AG04449 (cell line): ENCODE measurements at regions of chr10 and their contacts with region 1.

Region 1: DNA sequence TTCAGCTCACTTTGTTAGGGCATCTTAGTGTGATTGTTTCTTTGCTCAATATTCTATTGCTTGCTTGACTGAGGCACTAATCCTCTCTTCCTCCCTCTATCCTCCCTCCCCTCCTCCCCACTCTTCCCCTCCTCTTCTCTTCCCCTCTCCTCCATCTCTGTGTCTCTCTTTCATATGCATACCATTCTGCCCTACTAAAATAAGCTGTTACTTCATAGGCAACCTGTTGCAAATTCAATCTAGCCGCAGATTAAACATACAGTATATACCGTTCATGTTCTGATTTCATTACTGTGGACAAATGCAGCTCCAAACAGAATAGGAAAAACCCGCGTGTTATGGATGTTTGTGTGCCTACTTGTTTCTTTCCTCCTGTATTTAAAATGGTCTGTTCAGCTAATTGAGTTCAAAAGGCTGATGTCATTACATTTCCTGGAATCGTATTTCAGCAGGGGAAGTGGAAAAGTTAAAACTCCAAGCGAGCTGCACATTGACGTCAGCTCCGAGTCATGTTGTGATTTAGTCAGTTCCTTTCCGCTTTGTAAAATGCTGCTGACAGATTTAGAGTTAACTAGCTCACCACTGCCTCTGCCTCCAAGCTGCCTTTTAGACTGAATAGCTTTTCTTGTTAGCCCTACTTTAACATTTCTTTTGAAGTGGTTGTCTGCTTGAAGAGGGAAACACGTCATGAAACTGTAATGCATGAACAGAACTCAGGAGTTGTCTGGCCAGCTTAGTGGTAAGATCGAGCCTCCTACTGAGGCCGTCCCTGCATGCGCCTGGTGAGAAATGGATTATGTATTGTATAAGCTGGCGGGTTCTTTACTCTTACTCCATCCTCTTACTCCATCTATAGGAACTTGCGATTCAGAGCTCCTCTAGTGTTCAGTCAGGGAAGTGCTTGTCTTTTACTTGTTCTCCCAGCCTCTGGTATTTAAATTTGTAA is 69.0 kb downstream of the CREM start:
- DNase-seq: peak; percentile 82
- H3K4me3 ChIP-seq: peak overlapping the region; percentile 50
- CTCF ChIP-seq: peak; percentile 52

Region 2: GRCh38 chr10:35126530-35127296 is 68.9 kb before region 1 on chr10 and contains the start of gene CREM:
- CTCF ChIA-PET with region 1: interaction called, 34 read pairs
- POLR2A ChIA-PET with region 1: interaction called, 17 read pairs
- DNase-seq: peak; percentile 61
- H3K4me3 ChIP-seq: peak within 1 kb of the TSS; percentile 74
- CTCF ChIP-seq: peak; percentile 75

Region 3: DNA sequence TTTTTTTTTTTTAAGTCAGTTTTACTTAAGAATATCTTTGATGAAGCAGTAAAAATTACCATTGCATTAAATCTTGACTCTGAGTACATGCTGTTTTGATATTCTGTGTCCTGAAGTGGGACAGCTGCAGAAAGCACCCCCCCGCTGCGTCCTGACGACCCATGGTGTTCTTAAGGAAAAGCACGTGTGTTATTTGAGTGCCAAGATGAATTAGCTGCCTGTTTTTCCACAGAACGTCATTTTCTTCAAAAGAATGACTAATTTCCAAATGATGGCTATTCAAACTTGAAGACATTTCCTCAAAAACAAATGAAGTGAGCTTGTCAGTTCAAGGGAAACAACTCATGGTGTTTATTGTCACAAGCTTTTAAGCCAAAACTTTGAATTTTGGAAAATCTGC is 23.1 kb before region 1 on chr10:
- CTCF ChIA-PET with region 1: interaction called, 18 read pairs
- POLR2A ChIA-PET with region 1: no interaction called
- DNase-seq: no peak
- H3K4me3 ChIP-seq: no peak overlapping the region
- CTCF ChIP-seq: no peak

Region 4: GRCh38 chr10:35184527-35185171 is 11.0 kb before region 1 on chr10:
- CTCF ChIA-PET with region 1: interaction called, 27 read pairs
- POLR2A ChIA-PET with region 1: no interaction called
- DNase-seq: no peak
- H3K4me3 ChIP-seq: no peak overlapping the region
- CTCF ChIP-seq: no peak

Region 5: DNA sequence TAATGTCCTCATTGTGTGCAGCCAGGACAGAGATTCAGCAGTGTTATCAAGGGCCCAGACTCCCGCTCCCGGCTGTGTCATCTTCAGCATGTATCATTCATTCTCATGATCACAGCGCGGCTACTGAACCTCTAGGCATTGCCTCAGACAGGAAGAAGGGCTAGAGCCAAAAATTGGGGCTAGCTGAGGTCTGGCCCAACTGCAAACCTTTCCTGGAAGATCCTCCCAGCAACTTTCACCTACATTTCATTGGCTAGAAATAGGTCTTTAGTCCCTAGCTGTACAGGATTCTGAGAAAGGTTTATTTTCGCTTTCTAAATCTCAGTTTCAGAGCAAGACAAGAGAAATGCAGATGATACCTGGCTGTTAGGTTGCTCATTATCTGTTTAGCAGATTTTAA is 12.9 kb after region 1 on chr10:
- CTCF ChIA-PET with region 1: interaction called, 53 read pairs
- POLR2A ChIA-PET with region 1: no interaction called
- DNase-seq: no peak
- H3K4me3 ChIP-seq: no peak overlapping the region
- CTCF ChIP-seq: no peak

Region 6: DNA sequence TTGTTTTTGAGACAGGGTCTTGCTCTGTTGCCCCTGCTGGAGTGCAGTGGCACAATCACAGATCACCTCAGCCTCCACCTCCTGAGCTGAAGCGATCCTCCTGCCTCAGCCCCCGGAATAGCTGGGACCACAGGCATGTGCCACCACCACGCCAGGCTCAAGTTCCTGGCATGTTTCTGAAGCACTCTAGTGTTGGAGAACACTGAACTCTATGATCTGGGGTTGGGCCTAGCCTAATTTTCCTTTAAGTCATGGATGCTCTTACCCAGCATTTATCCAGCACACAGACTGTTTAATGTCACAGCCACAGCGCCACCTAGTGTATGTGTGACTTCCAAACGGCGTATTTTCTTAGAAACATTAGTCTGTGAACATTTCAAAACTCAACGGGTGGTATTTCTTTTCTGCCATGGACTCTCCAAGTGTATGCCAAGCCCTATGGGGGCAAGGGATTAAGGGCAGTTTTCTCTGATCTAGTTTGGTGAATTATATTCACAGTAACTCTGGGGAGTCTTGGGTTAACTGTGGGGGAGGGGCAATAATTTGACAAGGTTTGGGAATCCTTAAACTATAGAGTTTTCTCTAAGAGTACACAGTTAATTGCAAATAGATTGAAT is 22.8 kb after region 1 on chr10:
- CTCF ChIA-PET with region 1: interaction called, 39 read pairs
- POLR2A ChIA-PET with region 1: no interaction called
- DNase-seq: no peak
- H3K4me3 ChIP-seq: no peak overlapping the region
- CTCF ChIP-seq: peak; percentile 71

Region 7: DNA sequence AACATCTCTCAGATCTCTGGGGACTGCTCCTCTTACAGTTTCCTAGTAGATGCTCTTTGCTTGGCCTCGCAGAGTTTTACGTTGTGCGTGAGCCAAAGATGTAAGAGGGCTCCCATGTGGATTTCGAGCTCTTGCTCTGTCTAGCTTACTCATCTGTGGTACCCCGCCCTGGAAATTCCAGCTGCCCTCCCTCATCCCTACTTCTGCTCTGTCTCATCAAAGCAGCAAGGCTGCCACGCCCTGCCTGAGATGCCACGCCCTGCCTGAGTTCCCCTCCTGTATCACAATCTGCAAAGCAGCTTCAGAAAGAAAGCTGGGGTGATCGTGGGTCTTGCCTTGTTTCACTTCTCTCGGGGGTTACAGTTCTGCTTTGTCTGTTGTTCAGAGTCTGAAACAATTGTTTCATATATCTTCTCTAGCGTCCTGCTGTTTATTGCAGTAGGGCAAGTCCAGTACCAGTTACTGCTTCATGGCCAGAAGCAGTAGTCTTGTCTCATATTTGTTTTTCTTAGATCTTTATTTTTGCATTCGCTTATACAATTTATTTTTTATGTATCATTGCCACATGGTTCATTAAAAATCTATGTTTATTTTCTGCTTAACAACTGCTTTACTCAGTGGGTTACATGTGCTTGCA is 104.5 kb after region 1 on chr10:
- CTCF ChIA-PET with region 1: no interaction called
- POLR2A ChIA-PET with region 1: no interaction called
- DNase-seq: no peak
- H3K4me3 ChIP-seq: no peak overlapping the region
- CTCF ChIP-seq: no peak